Sigmoid colon (tissue), 7 donors: ENCODE measurements at regions of chr9 and their contacts with region 1.

Region 1: DNA sequence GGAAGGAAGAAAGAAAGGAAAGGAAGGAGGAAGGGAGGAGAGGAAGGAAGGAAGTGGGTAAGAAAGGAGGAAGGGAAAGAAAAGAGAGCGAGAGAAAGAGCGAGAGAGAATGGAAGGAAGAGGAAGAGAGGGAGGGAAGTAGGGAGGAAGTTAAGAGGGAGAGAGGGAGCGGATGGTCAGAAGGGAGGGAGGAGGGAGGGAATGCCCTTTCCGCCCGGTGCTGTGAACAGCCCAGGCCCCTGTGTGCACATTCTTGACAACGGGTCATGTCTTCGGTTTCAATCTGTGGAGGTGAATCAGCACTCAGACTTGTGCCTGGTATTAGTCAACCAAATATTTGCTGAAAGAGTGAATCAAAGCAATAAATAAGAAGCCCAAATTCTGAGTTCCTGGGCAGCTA is 39.2 kb downstream of the PRUNE2 start:
- DNase-seq: no peak
- H3K4me3 ChIP-seq: no peak overlapping the region
- H3K27ac ChIP-seq: peak overlapping the region; percentile 73 to 95 (median 82)
- H3K4me1 ChIP-seq: peaks cover 0 to 91% (median 60%) of the 10 kb centered on the region in 4 donors
- H3K27me3 ChIP-seq: no peaks in the 10 kb centered on the region
- CTCF ChIP-seq: no peak
- EP300 ChIP-seq: no peak
- POLR2A ChIP-seq: no peak

Region 2: DNA sequence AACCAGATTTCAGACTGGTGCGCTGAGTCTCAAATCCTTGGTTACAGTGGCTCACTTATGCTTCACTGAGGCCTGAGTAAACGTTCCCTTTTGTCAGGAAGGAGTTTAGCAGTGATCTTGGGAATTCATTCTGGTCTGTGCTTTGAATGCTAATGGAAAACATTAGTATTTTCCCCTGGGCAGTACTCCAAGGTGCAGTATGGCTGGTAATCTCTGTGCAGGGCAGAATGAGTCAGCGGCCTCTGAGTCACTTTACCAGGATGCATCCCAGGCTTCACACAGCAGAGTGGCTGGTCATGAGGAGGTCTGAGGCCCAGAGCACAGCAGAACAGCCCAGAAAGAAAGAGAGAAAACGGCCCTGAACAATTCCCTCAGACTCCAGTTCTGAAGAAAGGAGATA is 48.4 kb before region 1 on chr9:
- intact Hi-C with region 1: loop called (anchors 5 kb)
- DNase-seq: peak; percentile 95
- H3K4me3 ChIP-seq: no peak overlapping the region
- H3K27ac ChIP-seq: peak overlapping the region; percentile 81 to 94 (median 87)
- H3K4me1 ChIP-seq: peaks cover 0 to 71% (median 51%) of the 10 kb centered on the region in 4 donors
- H3K27me3 ChIP-seq: no peaks in the 10 kb centered on the region
- CTCF ChIP-seq: no peak
- EP300 ChIP-seq: peak in 3 of 4 donors; percentile 14 to 96 (median 58)
- POLR2A ChIP-seq: no peak